Endothelial cell of umbilical vein (primary cell): ENCODE measurements at regions of chr14 and their contacts with region 1.

Region 1: DNA sequence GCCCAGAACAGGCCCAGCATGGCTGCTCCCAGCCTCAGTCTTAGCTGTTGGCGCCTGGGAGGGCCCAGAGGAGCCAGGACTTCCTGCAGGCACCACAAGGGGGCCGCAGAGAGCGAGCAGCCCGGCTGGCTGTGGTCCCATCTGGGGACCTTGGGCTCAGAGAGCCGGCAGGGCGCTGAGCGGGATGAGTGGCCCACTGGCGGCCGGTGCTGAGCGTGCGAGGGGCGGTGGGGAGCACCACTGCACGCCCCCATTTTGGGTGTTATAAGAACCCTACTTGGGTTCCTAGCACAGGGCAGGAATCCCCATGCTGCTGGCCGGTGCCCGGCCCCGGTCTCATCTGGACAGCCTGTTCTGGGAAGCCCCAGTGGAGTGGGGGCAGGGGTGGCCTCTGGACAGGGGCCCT is 25.9 kb upstream of the CRIP2 start:
- DNase-seq: peak; percentile 74
- H3K4me3 ChIP-seq: no peak overlapping the region
- H3K27ac ChIP-seq: no peak overlapping the region
- H3K4me1 ChIP-seq: no peaks in the 10 kb centered on the region
- H3K27me3 ChIP-seq: no peaks in the 10 kb centered on the region
- CTCF ChIP-seq: peak; percentile 83 to 92
- POLR2A ChIP-seq: no peak

Region 2: DNA sequence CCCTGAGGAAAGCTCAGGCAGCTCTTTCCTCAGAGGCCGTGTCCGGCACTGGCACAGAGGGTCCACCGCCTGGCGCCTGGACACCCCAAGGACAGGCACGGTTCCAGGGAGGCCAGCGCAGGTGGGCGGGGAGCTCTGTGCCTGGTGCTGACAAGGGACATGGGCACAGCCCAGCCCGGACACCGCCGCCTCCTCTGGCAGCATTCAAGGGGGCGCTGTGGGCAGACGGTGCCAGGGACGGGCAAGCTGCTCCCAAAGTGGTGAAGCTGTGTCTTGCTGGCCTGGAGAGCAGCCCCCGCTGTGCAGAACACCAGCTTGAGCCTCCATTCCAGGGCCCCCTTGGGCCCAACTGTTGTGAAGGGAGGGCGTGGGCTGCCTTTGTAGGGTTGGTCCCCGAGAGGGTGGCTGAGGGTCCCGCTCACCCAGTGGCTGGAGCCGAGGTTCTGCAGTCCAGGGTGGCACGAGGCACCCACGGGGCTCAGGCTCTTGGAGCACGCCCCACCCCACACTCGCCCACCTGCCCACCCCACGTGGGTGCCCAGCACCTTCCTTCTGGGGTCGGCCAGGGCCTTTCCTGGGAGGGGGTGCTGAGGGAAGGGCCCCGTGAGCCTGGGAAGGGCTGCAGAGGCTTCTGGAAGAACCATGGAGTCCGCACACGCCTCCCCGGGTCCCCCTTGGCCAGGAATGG is 79.6 kb before region 1 on chr14:
- CTCF ChIA-PET with region 1: interaction called, 25 read pairs
- POLR2A ChIA-PET with region 1: no interaction called
- dilution Hi-C with region 1: no loop called
- intact Hi-C with region 1: loop called (anchors 1 kb)
- DNase-seq: no peak
- H3K4me3 ChIP-seq: no peak overlapping the region
- H3K27ac ChIP-seq: no peak overlapping the region
- H3K4me1 ChIP-seq: no peaks in the 10 kb centered on the region
- H3K27me3 ChIP-seq: no peaks in the 10 kb centered on the region
- CTCF ChIP-seq: no peak
- POLR2A ChIP-seq: no peak

Region 3: GRCh38 chr14:105430535-105430934 is 18.2 kb before region 1 on chr14:
- CTCF ChIA-PET with region 1: interaction called, 11 read pairs
- POLR2A ChIA-PET with region 1: no interaction called
- dilution Hi-C with region 1: no loop called
- intact Hi-C with region 1: no loop called
- DNase-seq: peak; percentile 90
- H3K4me3 ChIP-seq: no peak overlapping the region
- H3K27ac ChIP-seq: peak overlapping the region; percentile 86
- H3K4me1 ChIP-seq: peaks cover 34% of the 10 kb centered on the region
- H3K27me3 ChIP-seq: no peaks in the 10 kb centered on the region
- CTCF ChIP-seq: no peak
- POLR2A ChIP-seq: peak; percentile 20

Region 4: DNA sequence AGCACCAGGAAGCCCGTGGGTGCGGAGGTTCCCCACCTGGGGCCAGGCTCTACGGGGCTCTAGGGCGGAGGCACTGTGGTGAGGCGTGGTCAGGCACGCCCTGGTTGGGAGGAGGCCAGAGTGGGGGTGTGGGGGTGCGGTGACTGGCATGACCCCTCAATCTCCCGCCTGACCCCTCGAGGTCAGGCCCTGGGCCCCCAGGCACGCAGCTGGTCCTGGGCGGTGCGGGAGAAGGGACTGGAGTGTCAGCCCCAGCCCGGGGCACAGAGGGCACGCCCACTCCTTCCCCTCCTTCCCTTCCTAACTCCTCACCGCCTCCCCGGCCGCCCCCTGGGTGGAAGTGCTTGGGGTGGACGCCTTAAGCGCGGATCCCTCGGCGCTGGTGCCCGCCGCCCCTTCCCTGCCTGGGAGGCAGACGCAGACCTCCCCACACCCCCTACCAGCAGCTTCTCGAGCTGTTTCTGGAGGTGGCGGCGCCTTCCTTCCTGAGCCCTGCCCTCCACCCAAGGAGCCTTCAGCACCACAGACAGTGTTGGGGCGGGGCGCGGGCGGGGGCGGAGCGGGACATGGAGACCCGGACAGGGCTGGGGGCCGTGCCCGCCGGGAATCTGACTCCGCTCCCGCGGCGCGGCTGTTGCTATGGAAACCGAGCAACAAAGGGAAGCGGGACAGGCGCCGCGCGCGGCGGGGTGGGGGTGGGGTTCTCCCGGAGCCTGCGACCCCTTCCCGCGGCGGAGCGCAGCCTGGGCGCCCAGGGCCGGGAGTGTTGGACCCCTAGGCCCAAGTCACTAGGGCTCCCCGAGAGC is 25.2 kb after region 1 on chr14:
- CTCF ChIA-PET with region 1: interaction called, 12 read pairs
- POLR2A ChIA-PET with region 1: no interaction called
- dilution Hi-C with region 1: no loop called
- intact Hi-C with region 1: no loop called
- DNase-seq: peak; percentile 91
- H3K4me3 ChIP-seq: peak overlapping the region; percentile 21 to 93 (median 34)
- H3K27ac ChIP-seq: peak overlapping the region; percentile 90
- H3K4me1 ChIP-seq: peaks cover 19% of the 10 kb centered on the region
- H3K27me3 ChIP-seq: no peaks in the 10 kb centered on the region
- CTCF ChIP-seq: no peak
- POLR2A ChIP-seq: no peak

Region 5: DNA sequence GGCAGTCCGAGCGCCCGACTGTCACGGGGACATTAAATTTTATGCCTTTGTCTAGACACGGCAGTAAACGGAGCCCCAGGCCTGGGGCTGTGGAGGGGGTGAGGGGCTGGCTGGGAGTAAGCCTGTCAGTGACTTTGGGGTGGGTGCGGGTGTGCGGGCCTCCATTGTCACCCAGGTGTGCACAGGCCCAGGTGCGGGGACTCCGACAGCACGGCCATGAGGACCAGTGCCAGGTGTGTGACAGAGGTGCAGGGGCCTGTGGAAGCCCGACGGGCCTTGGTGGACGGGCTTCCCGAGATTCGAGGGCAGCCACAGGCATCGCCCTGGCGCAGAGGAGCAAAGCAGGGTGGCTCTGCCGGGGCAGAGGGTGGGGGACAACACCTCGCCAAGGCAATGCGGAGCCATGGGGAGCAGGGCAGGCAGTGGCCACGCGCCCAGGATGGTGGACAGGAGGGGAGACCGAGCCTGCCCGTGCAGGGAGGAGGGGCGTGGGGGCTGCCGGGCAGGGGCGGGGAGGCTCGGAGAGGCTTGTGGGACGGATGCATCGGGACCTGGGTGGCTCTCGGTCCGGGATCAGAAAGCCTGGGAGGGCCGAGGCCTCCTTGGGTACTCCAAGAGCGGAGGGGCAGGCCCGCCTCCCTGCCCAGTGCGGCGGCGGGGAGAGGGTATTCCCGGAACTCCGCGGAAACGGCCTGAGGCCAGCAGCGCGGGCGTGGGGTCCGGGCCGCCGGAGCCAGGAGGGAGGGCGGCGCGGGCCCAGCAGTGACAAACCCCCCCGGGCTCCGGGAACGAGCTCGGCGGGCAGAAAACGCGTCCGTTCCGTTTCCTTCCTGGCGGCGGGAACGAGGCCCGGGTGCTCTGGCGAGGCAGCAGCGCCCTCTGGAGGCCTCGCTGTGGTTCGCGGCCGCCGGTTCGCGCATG is 79.2 kb after region 1 on chr14:
- CTCF ChIA-PET with region 1: interaction called, 6 read pairs
- POLR2A ChIA-PET with region 1: no interaction called
- dilution Hi-C with region 1: no loop called
- intact Hi-C with region 1: loop called (anchors 1 kb)
- DNase-seq: peak; percentile 61
- H3K4me3 ChIP-seq: peak overlapping the region; percentile 26 to 63 (median 49)
- H3K27ac ChIP-seq: no peak overlapping the region
- H3K4me1 ChIP-seq: peaks cover 17% of the 10 kb centered on the region
- H3K27me3 ChIP-seq: peaks cover 6 to 7% of the 10 kb centered on the region in 2 experiments
- CTCF ChIP-seq: peak; percentile 68 to 91
- POLR2A ChIP-seq: peak; percentile 46

Region 6: DNA sequence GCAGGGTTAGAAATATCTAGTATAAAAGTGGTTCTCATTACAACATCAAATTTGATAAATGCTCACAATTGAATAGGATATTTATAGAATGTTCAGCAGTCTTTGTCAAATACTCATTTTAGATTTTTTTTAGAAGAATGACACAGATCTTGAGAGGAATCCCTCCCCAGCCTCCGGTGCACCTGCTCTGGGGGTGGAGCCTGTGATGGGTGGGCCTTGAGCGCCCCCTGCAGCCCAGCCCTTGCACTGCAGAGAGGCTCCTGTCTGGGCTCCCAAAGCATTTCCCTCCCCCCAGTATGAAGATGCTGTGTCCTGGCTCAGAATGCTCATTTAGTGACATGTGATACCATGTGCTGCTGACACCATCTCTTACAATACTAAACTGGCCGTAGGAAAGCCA is 870.0 kb after region 1 on chr14:
- CTCF ChIA-PET with region 1: no interaction called
- POLR2A ChIA-PET with region 1: no interaction called
- dilution Hi-C with region 1: no loop called
- intact Hi-C with region 1: no loop called
- DNase-seq: no peak
- H3K4me3 ChIP-seq: no peak overlapping the region
- H3K27ac ChIP-seq: no peak overlapping the region
- H3K4me1 ChIP-seq: no peaks in the 10 kb centered on the region
- H3K27me3 ChIP-seq: no peaks in the 10 kb centered on the region
- CTCF ChIP-seq: no peak
- POLR2A ChIP-seq: no peak